ENCODE measurements at regions of chr12 and their contacts with region 1.

Region 1: DNA sequence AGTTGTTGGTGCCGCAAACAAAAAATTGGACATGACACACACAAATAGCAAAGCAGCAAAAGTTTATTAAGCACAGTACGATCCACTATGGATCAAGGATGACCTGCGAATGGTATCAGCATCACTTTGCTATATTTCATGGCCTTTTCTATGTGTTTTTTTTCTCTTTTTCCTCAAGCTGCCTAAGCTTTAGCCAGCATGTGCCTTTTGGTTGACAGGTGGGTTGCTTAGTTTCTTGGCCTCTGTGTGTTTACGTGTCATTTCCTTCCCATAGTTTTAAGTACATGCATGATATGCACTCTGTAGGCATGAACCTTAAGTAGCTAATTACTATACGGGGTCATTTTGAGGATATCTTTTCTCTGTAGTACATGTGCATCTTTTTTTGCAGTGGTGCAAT is 9.8 kb downstream of the CD4 start:
- DNase-seq: no peak
- H3K4me3 ChIP-seq: no peak overlapping the region
- H3K27ac ChIP-seq: no peak overlapping the region
- H3K4me1 ChIP-seq: no peaks in the 10 kb centered on the region
- H3K27me3 ChIP-seq: peaks cover 35% of the 10 kb centered on the region
- CTCF ChIP-seq: no peak

Region 2: GRCh38 chr12:7180685-7181084 is 381.5 kb after region 1 on chr12:
- CTCF ChIA-PET with region 1: interaction called, 11 read pairs
- POLR2A ChIA-PET with region 1: no interaction called
- intact Hi-C with region 1: no loop called
- DNase-seq: peak in 1 of 2 experiments; percentile 25
- H3K4me3 ChIP-seq: no peak overlapping the region
- H3K27ac ChIP-seq: no peak overlapping the region
- H3K4me1 ChIP-seq: no peaks in the 10 kb centered on the region
- H3K27me3 ChIP-seq: peaks cover 9% of the 10 kb centered on the region; the same call in 1 of the 2 replicates
- CTCF ChIP-seq: no peak

Measured in PC-9 (cell line).